ENCODE measurements at regions of chr3 and their contacts with region 1.

Region 1: GRCh38 chr3:11236595-11237461 is 35.4 kb upstream of the ATG7 start:
- DNase-seq: peak; percentile 94
- ATAC-seq: peak; percentile 62
- H3K4me3 ChIP-seq: no peak overlapping the region
- H3K27ac ChIP-seq: peak overlapping the region; percentile 94
- H3K4me1 ChIP-seq: peaks cover 34% of the 10 kb centered on the region
- H3K27me3 ChIP-seq: no peaks in the 10 kb centered on the region
- CTCF ChIP-seq: peak; percentile 77

Region 2: GRCh38 chr3:11214448-11214980 is 22.3 kb before region 1 on chr3:
- CTCF ChIA-PET with region 1: no interaction called
- POLR2A ChIA-PET with region 1: no interaction called
- intact Hi-C with region 1: no loop called
- DNase-seq: no peak
- ATAC-seq: peak; percentile 6; the same call in 1 of the 2 replicates
- H3K4me3 ChIP-seq: no peak overlapping the region
- H3K27ac ChIP-seq: no peak overlapping the region
- H3K4me1 ChIP-seq: peaks cover 16% of the 10 kb centered on the region
- H3K27me3 ChIP-seq: no peaks in the 10 kb centered on the region
- CTCF ChIP-seq: no peak

Region 3: GRCh38 chr3:11250902-11251813 is 14.3 kb after region 1 on chr3:
- CTCF ChIA-PET with region 1: no interaction called
- POLR2A ChIA-PET with region 1: interaction called, 3 read pairs
- intact Hi-C with region 1: loop called (anchors 1 kb)
- DNase-seq: peak; percentile 74
- ATAC-seq: peak; percentile 89
- H3K4me3 ChIP-seq: peak overlapping the region; percentile 24; the same call in 1 of the 2 replicates
- H3K27ac ChIP-seq: peak overlapping the region; percentile 90
- H3K4me1 ChIP-seq: peaks cover 33% of the 10 kb centered on the region
- H3K27me3 ChIP-seq: no peaks in the 10 kb centered on the region
- CTCF ChIP-seq: no peak

Region 4: DNA sequence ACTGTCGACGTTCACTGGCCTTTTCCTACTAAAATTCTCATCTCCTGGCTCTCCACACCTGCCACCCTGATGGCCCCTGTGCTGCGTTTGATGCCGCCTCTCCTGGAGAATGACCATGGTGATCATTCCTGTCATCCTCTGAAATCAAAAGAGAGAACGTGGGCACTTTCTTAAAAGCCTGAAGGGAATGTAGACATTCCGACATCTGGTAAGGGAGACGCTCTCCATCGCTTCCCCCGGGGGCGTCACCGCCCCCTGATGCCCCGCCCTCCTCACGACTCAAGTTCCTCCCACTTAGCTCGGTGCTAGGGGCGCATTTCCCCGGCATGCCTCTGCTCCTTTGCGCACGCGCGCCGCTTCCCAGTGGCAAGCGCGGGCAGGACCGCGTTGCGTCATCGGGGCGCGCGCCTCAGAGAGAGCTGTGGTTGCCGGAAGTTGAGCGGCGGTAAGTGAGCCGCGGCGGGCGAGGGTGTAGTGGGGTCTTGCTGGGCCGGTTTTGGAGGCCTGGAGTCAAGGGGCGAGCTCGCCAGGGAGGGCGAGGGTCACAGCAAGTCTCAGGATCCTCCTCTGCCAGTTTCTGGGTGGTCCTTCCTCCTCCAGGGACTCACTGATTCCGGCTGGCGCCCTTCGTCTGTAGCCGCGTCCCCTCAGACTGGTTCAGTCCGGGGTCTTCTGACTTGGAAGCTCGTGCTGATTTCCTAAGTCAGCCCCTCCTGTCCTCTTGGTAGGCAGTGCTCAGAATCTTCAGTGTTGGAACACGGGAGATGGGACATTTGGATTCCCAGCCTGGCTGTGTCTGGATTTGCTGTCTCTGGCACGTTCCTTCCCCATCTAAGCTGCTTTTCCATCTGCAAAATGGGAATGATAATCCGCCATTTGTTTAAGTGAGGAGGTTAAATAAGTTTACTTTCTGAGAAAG is 35.4 kb after region 1 on chr3 and contains the start of gene ATG7:
- CTCF ChIA-PET with region 1: interaction called, 7 read pairs
- POLR2A ChIA-PET with region 1: interaction called, 3 read pairs
- intact Hi-C with region 1: loop called (anchors 1 kb)
- DNase-seq: peak; percentile 98
- ATAC-seq: peak; percentile 86
- H3K4me3 ChIP-seq: peak within 1 kb of the TSS; percentile 83
- H3K27ac ChIP-seq: peak within 1 kb of the TSS; percentile 54
- H3K4me1 ChIP-seq: peaks cover 25% of the 10 kb centered on the region
- H3K27me3 ChIP-seq: no peaks in the 10 kb centered on the region
- CTCF ChIP-seq: no peak
- total RNA-seq, gene ATG7: 33.2 and 36.5 TPM in 2 replicates

Region 5: GRCh38 chr3:11288786-11289682 is 52.2 kb after region 1 on chr3:
- CTCF ChIA-PET with region 1: interaction called, 3 read pairs
- POLR2A ChIA-PET with region 1: interaction called, 4 read pairs
- intact Hi-C with region 1: loop called (anchors 1 kb)
- DNase-seq: peak; percentile 94
- ATAC-seq: peak; percentile 79
- H3K4me3 ChIP-seq: peak overlapping the region; percentile 55
- H3K27ac ChIP-seq: peak overlapping the region; percentile 97
- H3K4me1 ChIP-seq: peaks cover 61% of the 10 kb centered on the region
- H3K27me3 ChIP-seq: no peaks in the 10 kb centered on the region
- CTCF ChIP-seq: no peak